ENCODE measurements at regions of chr5 and their contacts with region 1.

Region 1: GRCh38 chr5:79020861-79021561 is 35.9 kb upstream of the ARSB start:
- DNase-seq: peak; percentile 34
- CTCF ChIP-seq: peak; percentile 82

Region 2: DNA sequence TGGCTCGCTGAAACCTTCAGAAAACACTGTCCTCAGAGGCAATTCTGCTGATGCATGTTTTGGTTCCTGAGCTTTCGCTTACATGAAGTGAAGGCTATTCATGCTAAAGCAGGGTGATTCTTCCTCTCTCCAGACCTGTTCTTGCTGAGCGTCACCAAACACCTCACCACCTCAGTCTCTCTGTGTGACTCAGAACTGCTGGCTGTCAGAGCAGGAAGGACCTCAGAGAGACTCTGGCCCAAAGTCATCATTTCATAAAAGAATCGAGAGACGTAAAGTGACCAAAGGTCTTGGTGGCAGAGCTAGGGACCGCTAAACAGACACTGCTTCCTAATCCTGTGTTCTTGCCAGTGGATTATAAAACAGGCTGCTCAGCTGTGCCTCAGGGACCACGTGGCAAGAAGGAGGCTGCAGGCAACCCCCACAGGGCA is 446.3 kb before region 1 on chr5:
- CTCF ChIA-PET with region 1: no interaction called
- POLR2A ChIA-PET with region 1: no interaction called
- DNase-seq: peak; percentile 29
- CTCF ChIP-seq: no peak

Region 3: GRCh38 chr5:78819166-78819565 is 201.8 kb before region 1 on chr5:
- CTCF ChIA-PET with region 1: no interaction called
- POLR2A ChIA-PET with region 1: no interaction called
- DNase-seq: no peak
- CTCF ChIP-seq: no peak

Region 4: DNA sequence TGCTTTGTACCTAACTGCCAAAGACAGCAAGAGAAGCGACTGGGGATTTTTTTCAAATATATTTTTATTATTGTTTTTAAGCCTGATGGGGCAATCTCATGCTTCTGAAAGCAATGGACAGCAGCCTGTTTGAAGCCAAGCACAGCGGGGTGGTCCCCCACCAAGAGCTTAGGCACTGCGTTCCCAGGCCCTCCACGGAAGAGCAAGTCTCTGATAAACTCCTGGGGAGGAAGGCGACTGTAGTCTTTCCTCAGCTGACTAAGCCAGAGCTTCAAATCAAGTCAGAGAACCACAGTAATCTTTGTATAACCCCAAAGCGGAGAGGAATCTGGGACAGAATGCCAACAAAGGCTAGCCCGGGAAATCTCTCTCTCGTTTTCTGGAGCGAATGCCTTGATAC is 90.3 kb before region 1 on chr5:
- CTCF ChIA-PET with region 1: no interaction called
- POLR2A ChIA-PET with region 1: no interaction called
- DNase-seq: no peak
- CTCF ChIP-seq: no peak

Region 5: DNA sequence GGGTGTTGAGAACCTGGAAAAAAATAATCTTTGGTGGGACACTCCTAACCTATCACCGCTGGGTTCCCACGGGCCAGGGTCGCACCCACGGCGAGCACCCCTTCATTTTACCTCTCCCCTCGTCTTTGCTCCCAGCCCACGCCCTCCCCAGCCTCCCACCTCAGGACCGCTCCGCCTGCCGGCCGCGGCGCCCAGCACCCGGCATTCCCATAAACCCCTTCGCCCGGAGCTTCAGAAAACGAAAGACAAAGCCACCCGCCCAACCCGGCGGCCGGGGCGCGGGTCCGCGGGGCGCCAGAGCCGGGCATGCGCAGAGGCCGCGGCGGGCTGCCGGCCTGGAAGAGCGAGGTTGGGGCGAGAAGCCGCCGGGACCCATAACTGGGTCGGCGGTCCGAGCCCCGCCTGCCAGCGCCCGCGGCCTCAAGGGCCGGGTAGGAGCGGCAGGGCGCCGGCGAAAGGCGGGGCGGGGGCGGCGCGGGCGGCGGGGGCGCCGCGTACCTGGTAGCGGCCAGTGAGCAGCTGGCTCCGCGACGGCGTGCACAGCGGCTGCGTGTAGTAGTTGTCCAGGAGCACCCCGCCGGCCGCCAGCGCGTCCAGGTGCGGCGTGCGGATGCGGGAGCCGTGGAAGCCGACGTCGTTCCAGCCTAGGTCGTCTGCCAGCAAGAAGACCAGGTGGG is 36.4 kb before region 1 on chr5:
- CTCF ChIA-PET with region 1: interaction called, 19 read pairs
- POLR2A ChIA-PET with region 1: no interaction called
- DNase-seq: peak; percentile 92
- CTCF ChIP-seq: peak; percentile 11

Region 6: DNA sequence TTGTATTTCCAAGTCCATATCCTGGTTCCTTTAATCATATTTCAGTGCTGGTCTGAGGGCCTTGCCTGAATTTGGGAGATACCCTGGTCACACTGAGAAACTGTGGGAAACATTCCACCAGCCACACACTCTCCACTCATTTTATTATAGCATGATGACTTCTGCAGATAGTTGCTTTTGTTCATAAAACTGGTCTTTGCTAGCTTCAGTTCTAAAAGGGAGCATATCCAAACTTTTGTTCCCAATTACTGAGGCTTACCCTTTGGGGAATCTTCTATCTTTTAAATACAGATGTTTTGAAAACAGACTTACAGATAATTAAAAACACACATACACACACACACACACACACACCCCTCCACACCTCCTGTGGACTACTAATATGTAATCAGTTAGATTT is 27.4 kb after region 1 on chr5:
- CTCF ChIA-PET with region 1: interaction called, 60 read pairs
- POLR2A ChIA-PET with region 1: no interaction called
- DNase-seq: no peak
- CTCF ChIP-seq: no peak

Region 7: GRCh38 chr5:79107020-79107796 is 86.2 kb after region 1 on chr5:
- CTCF ChIA-PET with region 1: interaction called, 11 read pairs
- POLR2A ChIA-PET with region 1: no interaction called
- DNase-seq: no peak
- CTCF ChIP-seq: no peak

Region 8: DNA sequence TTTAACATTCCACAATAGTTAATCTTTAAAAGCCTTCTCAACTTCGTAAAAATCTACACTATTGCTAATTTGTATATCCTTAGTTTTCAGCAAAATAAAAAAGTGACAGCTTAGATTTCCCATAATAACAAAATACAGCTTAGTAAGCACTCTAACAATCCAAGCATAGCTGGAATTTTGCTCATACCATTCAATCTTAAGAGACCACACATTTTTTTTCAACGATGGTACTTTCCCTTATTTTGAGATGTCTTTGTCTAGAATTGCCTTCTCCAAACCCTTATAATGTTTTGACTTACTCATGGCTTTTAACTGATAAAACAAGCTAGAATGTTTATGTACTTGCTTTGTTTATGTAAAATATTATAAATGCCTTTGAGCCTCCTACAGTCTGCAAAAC is 427.3 kb after region 1 on chr5:
- CTCF ChIA-PET with region 1: interaction called, 11 read pairs
- POLR2A ChIA-PET with region 1: no interaction called
- DNase-seq: no peak
- CTCF ChIP-seq: no peak

Region 9: DNA sequence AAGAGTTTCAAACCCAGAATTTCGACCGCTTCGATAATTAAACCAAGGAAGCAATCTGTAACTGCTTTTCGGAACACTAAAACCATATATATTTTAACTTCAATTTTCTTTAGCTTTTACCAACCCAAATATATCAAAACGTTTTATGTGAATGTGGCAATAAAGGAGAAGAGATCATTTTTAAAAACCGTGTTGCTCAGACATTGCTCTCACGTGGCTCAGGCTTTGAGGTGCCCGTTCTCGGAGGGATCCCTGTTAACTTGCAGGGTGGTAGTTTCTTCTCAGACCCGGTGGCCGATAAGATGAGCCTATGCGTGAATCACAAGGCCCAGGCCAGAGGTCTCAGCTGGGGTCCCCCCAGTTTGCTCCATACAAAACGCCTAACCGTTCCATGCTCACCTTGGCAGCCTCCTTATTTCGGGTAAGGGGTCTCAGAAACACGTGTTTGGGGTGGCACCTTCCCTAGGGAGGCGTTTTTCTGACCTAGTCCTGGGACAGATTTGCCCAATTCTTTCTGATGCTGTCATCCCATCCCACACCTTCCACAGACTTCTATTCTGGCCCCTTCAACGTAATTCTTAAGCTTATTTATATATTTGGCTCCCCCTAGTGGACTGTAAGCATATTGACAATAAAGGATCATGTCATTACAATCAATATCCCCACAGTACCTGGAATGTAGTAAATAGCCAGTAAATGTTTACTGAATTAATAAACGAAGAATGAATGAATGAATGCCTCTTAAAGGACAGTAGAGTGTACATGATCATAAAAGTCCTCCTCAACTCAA is 1062.3 kb after region 1 on chr5:
- CTCF ChIA-PET with region 1: interaction called, 17 read pairs
- POLR2A ChIA-PET with region 1: no interaction called
- DNase-seq: peak; percentile 73
- CTCF ChIP-seq: peak; percentile 66

Measured in GM10248 (cell line).